K562 (cell line): ENCODE measurements at regions of chr11 and their contacts with region 1.

Region 1: DNA sequence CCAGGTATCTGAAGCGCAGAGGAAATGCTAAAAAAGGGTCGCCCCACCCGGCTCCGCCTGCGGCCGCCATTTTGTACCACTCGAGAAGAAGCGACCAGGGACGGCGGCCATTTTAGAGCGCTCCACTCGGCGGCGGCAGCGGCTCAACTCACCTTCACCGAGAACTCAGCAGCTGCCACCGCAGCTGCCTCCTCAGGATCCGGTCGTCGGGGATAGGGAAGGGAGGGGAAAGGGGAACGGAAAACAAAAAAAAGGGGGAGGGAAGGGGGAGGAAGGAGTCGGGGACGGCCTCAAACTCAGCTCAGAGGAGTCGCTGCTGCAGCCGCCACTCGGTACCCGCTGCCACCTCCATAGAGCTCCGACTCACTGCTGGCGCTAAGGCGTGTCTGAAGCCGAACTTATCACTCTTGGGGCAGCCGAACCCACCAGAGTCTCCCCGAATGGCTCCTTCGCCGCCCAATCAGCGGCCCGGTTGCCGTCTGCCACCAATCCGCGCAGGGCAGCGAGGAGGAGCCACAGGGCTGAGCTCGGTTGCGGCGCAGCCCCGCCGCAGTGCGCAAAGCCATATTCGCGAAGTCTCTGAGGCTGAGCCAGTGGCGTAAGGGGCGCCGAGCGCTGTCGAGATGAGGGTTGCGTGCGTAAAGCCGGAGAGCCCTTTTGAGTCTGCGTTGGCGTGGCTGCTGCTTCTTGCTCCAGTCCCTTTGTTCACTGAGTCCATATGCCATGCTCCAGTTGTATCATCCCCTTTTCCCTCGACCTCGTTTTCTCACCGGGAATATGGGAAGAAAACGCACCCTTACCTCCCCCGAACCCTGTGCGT is at the start of gene EIF4G2:
- DNase-seq: peak; percentile 97 to 99 (median 98)
- ATAC-seq: peak; percentile 96
- H3K4me3 ChIP-seq: peak within 1 kb of the TSS; percentile 94
- H3K27ac ChIP-seq: peak within 1 kb of the TSS; percentile 98
- H3K4me1 ChIP-seq: peaks cover 11 to 13% of the 10 kb centered on the region in 2 experiments; a peak in 4 of 5 replicates
- H3K27me3 ChIP-seq: no peaks in the 10 kb centered on the region
- CTCF ChIP-seq: no peak; a peak in 1 of 6 replicates
- EP300 ChIP-seq: peak; percentile 12; the same call in 1 of the 2 replicates
- POLR2A ChIP-seq: peak; percentile 100
- RAD21 ChIP-seq: peak in 1 of 2 experiments; percentile 9; a peak in 1 of 4 replicates
- polyA plus RNA-seq, gene EIF4G2: 206 to 683 TPM

Region 2: DNA sequence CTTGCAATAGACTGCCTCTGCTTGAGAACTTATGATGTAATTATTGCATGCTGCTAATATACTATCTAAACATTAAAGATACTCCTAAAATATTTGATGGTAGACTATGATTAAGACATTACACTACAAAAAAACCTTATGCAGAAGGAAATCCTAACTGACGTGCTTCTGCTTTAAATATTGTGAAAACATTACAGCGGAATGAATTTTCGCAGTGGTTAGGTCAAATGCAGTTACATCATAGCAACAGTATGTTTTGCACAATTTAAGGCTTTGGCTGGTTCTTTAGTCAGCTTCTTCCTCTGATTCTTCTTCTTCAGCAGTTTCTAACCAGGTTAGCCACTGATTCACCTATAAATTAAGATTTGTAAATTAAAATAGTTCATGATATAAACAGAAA is 11.2 kb before region 1 on chr11:
- CTCF ChIA-PET with region 1: interaction called, 3 read pairs
- POLR2A ChIA-PET with region 1: interaction called, 105 read pairs
- in situ Hi-C with region 1: no loop called
- intact Hi-C with region 1: no loop called
- DNase-seq: no peak
- ATAC-seq: no peak
- H3K4me3 ChIP-seq: no peak overlapping the region
- H3K27ac ChIP-seq: no peak overlapping the region
- H3K4me1 ChIP-seq: peaks cover 3 to 6% of the 10 kb centered on the region in 2 experiments; a peak in 4 of 5 replicates
- H3K27me3 ChIP-seq: no peaks in the 10 kb centered on the region
- CTCF ChIP-seq: no peak
- EP300 ChIP-seq: no peak
- POLR2A ChIP-seq: no peak
- RAD21 ChIP-seq: no peak

Region 3: DNA sequence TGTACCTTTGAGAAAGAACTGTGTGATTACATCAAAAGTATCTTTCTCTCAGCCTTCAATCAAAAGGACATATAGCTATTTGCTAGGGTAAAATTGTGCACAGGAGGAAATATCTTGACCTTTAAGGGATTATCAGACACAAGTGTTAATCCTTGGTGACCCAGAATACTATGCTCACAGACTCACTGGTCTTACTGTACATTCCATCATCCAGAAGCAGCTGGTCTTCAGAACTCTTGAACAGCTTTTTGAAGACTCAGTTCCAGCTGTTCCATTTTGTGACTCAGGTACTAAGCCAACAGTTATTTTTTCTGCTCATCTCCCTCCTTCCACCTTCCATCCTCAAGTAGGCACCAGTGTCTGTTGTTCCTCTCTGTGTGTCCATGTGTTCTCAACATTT is 29.3 kb after region 1 on chr11:
- CTCF ChIA-PET with region 1: no interaction called
- POLR2A ChIA-PET with region 1: interaction called, 41 read pairs
- in situ Hi-C with region 1: no loop called
- intact Hi-C with region 1: no loop called
- DNase-seq: no peak
- ATAC-seq: peak; percentile 42
- H3K4me3 ChIP-seq: no peak overlapping the region
- H3K27ac ChIP-seq: no peak overlapping the region
- H3K4me1 ChIP-seq: peaks cover 3 to 8% of the 10 kb centered on the region in 2 experiments; a peak in 4 of 5 replicates
- H3K27me3 ChIP-seq: no peaks in the 10 kb centered on the region
- CTCF ChIP-seq: no peak
- EP300 ChIP-seq: no peak
- POLR2A ChIP-seq: no peak
- RAD21 ChIP-seq: no peak

Region 4: GRCh38 chr11:10857709-10858438 is 49.1 kb after region 1 on chr11 and contains the start of gene ZBED5:
- CTCF ChIA-PET with region 1: interaction called, 4 read pairs
- POLR2A ChIA-PET with region 1: interaction called, 56 read pairs
- in situ Hi-C with region 1: no loop called
- intact Hi-C with region 1: loop called (anchors 1 kb)
- DNase-seq: peak; percentile 87 to 99 (median 92)
- ATAC-seq: peak; percentile 96
- H3K4me3 ChIP-seq: peak within 1 kb of the TSS; percentile 66
- H3K27ac ChIP-seq: peak within 1 kb of the TSS; percentile 89
- H3K4me1 ChIP-seq: peaks cover 0 to 11% of the 10 kb centered on the region in 2 experiments; a peak in 3 of 5 replicates
- H3K27me3 ChIP-seq: no peaks in the 10 kb centered on the region
- CTCF ChIP-seq: no peak; a peak in 1 of 6 replicates
- EP300 ChIP-seq: peak; percentile 6; the same call in 1 of the 2 replicates
- POLR2A ChIP-seq: peak; percentile 86
- RAD21 ChIP-seq: peak in 1 of 2 experiments; percentile 20; a peak in 2 of 4 replicates
- polyA plus RNA-seq, gene ZBED5: 21.3 to 25.1 TPM

Region 5: GRCh38 chr11:10920205-10920604 is 111.4 kb after region 1 on chr11:
- CTCF ChIA-PET with region 1: no interaction called
- POLR2A ChIA-PET with region 1: interaction called, 12 read pairs
- in situ Hi-C with region 1: no loop called
- intact Hi-C with region 1: no loop called
- DNase-seq: peak; percentile 52 to 91 (median 72)
- ATAC-seq: peak; percentile 99
- H3K4me3 ChIP-seq: no peak overlapping the region
- H3K27ac ChIP-seq: peak overlapping the region; percentile 93
- H3K4me1 ChIP-seq: peaks cover 0 to 20% of the 10 kb centered on the region in 2 experiments; a peak in 3 of 5 replicates
- H3K27me3 ChIP-seq: no peaks in the 10 kb centered on the region
- CTCF ChIP-seq: no peak
- EP300 ChIP-seq: peak; percentile 82; the same call in 1 of the 2 replicates
- POLR2A ChIP-seq: no peak; the same call in 1 of the 2 replicates
- RAD21 ChIP-seq: peak in 1 of 2 experiments; percentile 8; a peak in 1 of 4 replicates

Region 6: DNA sequence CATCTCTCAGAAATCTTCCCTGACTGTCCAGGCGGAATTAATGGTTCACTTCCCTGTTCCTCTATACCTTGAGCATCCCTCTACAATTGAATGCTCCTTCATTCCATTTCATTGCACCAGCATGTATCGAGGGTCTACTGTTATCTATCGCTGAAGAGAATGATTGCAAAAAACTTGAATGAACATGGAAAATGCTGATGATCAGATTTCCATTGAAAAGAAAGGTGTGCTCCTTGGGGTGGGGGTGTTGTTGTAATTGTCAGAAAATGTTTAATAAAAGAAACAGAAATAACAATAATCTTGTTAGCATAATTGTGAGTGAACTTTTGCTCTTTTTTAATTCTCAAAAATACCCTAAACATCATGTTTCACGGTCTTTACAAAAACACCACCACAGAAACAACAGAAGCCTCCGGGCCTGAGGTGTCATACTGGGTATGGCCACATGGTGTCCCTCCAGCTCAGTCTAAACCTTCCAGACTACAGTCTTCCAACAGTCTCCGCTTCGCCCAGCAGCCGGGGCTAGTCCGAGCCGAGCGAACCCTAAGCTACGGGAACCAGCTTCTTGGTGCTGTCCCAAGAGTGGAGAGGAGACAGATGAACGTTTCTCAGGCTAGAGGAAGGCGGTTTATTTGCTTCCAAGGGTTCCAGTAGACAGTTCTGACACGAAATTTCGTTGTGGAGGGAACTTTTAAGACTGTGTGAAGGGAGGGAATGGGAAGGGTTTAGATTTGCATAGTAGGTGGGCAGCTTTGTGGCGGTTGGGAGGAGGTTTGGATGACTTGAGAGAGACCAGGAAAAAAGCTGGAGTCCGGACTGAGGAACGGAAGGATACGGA is 124.9 kb after region 1 on chr11:
- CTCF ChIA-PET with region 1: no interaction called
- POLR2A ChIA-PET with region 1: interaction called, 26 read pairs
- in situ Hi-C with region 1: no loop called
- intact Hi-C with region 1: loop called (anchors 2 kb)
- DNase-seq: peak; percentile 81 to 93 (median 84)
- ATAC-seq: peak; percentile 97
- H3K4me3 ChIP-seq: peak overlapping the region; percentile 36
- H3K27ac ChIP-seq: peak overlapping the region; percentile 41; the same call in 2 of the 3 replicates
- H3K4me1 ChIP-seq: peaks cover 9 to 26% of the 10 kb centered on the region in 2 experiments; a peak in 4 of 5 replicates
- H3K27me3 ChIP-seq: no peaks in the 10 kb centered on the region
- CTCF ChIP-seq: peak; percentile 97 to 98 (median 98)
- EP300 ChIP-seq: no peak; the same call in 1 of the 2 replicates
- POLR2A ChIP-seq: 0 out of 2 replicates have a peak, but pooled peaks have one; percentile 45
- RAD21 ChIP-seq: peak; percentile 95 to 96

Region 7: DNA sequence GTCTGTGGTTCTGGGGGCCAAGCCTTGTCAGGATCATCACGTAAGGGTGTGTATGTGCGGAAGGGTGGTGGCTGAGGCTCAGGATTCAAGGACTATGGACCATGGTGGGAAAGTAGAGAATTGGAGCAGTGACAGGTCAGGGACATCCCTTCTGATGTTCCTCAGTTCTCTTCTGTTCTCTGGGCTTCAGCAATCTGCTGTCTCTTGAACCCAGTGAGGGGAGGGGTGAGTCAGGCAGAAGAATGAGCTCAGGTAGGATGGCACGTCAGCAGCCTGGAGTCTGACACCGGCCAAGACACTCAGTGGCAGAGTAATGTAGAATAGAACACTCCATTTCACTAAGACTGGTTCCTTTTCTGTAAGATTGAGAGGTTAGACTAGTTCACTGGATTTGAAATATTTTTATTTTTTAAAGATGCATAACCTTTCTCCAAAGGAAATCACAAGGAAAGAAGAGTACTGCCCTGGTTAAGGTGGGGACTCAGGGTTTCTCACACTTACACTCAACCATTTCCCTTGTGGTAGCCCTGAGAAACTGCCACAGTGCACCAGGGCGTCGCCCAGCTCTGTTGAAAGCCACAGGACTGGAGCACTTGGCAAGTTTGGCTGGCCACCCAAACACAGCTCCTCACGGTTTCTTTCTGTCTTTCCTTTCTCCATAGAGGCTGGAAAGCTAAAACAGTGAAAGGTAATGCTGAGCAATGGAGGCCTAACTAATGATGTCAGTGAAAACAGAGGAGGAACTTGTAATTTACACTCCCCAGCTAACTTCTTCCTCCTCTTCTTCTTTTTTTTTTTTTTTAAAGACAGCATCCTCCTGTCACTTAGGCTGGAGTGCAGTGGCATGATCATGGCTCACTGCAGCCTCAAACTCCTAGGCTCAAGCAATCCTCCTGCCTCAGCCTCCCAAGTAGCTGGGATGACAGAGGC is 1278.6 kb after region 1 on chr11:
- CTCF ChIA-PET with region 1: no interaction called
- POLR2A ChIA-PET with region 1: no interaction called
- in situ Hi-C with region 1: no loop called
- intact Hi-C with region 1: no loop called
- DNase-seq: peak in 2 of 4 experiments; percentile 28 to 31
- ATAC-seq: peak; percentile 58
- H3K4me3 ChIP-seq: no peak overlapping the region
- H3K27ac ChIP-seq: no peak overlapping the region
- H3K4me1 ChIP-seq: peaks cover 14 to 20% of the 10 kb centered on the region in 2 experiments
- H3K27me3 ChIP-seq: peaks cover 0 to 9% of the 10 kb centered on the region in 2 experiments; a peak in 1 of 5 replicates
- CTCF ChIP-seq: no peak
- EP300 ChIP-seq: no peak
- POLR2A ChIP-seq: no peak
- RAD21 ChIP-seq: no peak